Motor neuron (in vitro differentiated cells): ENCODE measurements at regions of chr1 and their contacts with region 1.

Region 1: DNA sequence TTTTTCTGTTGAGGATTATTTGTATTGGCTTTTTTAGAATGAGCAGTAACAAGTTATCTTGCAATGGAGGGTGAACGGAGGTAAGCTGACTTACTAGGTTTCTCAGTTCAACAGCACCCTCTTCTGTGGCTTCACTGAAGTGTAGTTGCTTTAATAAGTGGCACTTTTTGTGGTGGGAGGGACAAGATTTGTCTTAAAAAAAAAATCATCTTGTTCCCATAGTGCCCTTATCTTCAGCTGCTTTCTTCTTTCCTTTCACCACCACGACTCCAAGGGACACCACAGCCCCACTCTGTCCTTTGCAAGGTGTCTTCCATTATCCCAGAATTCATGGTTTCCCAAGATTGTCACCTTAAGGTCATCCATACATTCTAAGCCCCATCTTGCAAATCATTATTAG is 92.9 kb downstream of the PIGK start:
- ATAC-seq: peak; percentile 61 to 85 (median 72)
- H3K4me3 ChIP-seq: no peak overlapping the region
- H3K27ac ChIP-seq: no peak overlapping the region
- H3K4me1 ChIP-seq: peaks cover 0 to 9% of the 10 kb centered on the region in 2 donors

Region 2: GRCh38 chr1:75908717-75909152 is 1217.6 kb before region 1 on chr1:
- in situ Hi-C with region 1: loop called in 1 of 9 experiments (anchors 25 kb)
- ATAC-seq: peak in 7 of 8 experiments; percentile 31 to 91 (median 83)
- H3K4me3 ChIP-seq: no peak overlapping the region
- H3K27ac ChIP-seq: no peak overlapping the region
- H3K4me1 ChIP-seq: no peaks in the 10 kb centered on the region

Region 3: DNA sequence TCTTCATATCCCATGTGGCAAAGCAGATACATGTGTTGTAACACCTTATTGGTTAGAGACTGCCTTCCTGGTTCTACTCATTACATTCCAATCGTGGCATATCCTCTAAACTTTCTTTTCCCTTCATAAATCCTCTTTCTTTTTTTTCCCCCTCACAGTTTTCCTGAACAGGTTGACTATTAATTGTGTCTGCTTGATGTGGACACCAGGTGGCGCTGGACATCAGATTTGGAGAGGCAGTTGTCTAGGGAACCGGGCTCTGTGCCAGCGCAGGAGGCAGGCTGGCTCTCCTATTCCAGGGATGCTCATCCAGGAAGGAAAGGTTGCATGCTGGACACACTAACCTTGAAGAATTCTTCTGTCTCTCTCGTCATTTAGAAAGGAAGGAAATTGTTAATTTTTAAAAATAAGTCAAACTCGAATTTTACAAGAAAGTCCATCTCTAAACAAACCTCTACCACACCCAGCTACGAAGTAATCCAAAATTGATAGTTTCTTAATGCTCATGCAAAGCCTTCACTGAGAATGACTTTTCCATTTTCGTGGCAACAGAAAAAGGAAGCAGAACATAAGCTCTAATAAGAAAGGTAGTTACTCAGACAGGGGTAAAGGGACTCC is 1134.7 kb before region 1 on chr1:
- in situ Hi-C with region 1: loop called in 1 of 9 experiments (anchors 25 kb)
- ATAC-seq: peak; percentile 69 to 98 (median 90)
- H3K4me3 ChIP-seq: no peak overlapping the region
- H3K27ac ChIP-seq: no peak overlapping the region
- H3K4me1 ChIP-seq: peaks cover 0 to 4% of the 10 kb centered on the region in 2 donors

Region 4: GRCh38 chr1:76330991-76331603 is 795.2 kb before region 1 on chr1:
- in situ Hi-C with region 1: loop called in 3 of 9 experiments (anchors 25 kb)
- ATAC-seq: peak in 5 of 8 experiments; percentile 51 to 80 (median 73)
- H3K4me3 ChIP-seq: no peak overlapping the region
- H3K27ac ChIP-seq: no peak overlapping the region
- H3K4me1 ChIP-seq: peaks cover 4 to 10% of the 10 kb centered on the region in 2 donors

Region 5: GRCh38 chr1:77202751-77203150 is 76.4 kb after region 1 on chr1:
- in situ Hi-C with region 1: no loop called
- ATAC-seq: no peak
- H3K4me3 ChIP-seq: no peak overlapping the region
- H3K27ac ChIP-seq: no peak overlapping the region
- H3K4me1 ChIP-seq: no peaks in the 10 kb centered on the region

Region 6: DNA sequence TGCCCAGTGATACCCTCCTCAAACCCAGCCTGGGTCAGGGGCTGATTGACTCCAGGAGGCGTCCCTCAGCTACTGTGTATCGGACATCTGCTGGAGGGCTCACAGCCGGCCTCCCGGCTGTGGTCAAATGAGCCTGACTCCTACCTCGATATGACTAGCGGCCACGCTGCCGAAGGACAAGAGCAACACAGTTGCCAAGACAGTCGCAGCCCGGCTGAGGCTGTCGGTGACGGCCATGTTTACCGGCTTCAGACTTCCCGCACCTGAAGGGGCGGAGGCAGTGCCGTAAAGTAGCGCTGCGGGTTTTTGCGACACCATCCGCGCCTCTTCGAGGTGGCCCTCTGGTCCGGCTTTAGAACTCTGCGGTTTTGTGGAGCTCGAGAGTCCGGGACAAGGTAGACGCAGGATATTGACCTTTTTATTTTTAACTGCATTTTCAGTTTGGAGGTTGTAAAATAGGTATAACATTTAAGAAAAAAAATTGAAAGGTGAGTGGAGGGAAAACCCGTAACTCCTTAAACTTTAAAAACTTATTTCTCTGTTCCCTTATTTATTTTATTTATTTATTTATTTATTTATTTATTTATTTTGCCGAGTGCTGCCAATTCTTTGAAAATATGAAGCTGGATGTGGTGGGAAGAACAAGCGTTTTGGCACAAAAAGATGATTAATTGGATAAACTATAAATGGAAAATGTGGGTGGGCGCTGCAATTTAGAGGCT is 93.0 kb after region 1 on chr1 and contains the start of gene PIGK:
- in situ Hi-C with region 1: no loop called
- ATAC-seq: peak; percentile 93 to 98 (median 96)
- H3K4me3 ChIP-seq: peak within 1 kb of the TSS; percentile 65 to 96 (median 93)
- H3K27ac ChIP-seq: peak within 1 kb of the TSS; percentile 65 to 83
- H3K4me1 ChIP-seq: peaks cover 13% of the 10 kb centered on the region in 2 donors
- total RNA-seq, gene PIGK: 13.5 to 37.3 (median 20.3) TPM